Activated CD4-positive, alpha-beta memory T cell treated with anti-CD3 and anti-CD28 coated beads for 36 hours (primary cell): ENCODE measurements at regions of chr2 and their contacts with region 1.

Region 1: GRCh38 chr2:233953087-233953801 is 36.1 kb downstream of the TRPM8 start:
- DNase-seq: no peak
- H3K4me3 Mint-ChIP-seq: no peak overlapping the region
- H3K27ac Mint-ChIP-seq: no peak overlapping the region
- H3K4me1 Mint-ChIP-seq: no peaks in the 10 kb centered on the region
- H3K27me3 Mint-ChIP-seq: peaks cover 29% of the 10 kb centered on the region

Region 2: GRCh38 chr2:233929352-233930022 is 23.8 kb before region 1 on chr2:
- CTCF ChIA-PET with region 1: no interaction called
- POLR2A ChIA-PET with region 1: no interaction called
- intact Hi-C with region 1: loop called (anchors 1 kb)
- DNase-seq: no peak
- H3K4me3 Mint-ChIP-seq: no peak overlapping the region
- H3K27ac Mint-ChIP-seq: no peak overlapping the region
- H3K4me1 Mint-ChIP-seq: peaks cover 4% of the 10 kb centered on the region
- H3K27me3 Mint-ChIP-seq: peaks cover 43% of the 10 kb centered on the region

Region 3: GRCh38 chr2:233940376-233941276 is 12.6 kb before region 1 on chr2:
- CTCF ChIA-PET with region 1: no interaction called
- POLR2A ChIA-PET with region 1: no interaction called
- intact Hi-C with region 1: no loop called
- DNase-seq: no peak
- H3K4me3 Mint-ChIP-seq: no peak overlapping the region
- H3K27ac Mint-ChIP-seq: no peak overlapping the region
- H3K4me1 Mint-ChIP-seq: peaks cover 3% of the 10 kb centered on the region
- H3K27me3 Mint-ChIP-seq: peaks cover 52% of the 10 kb centered on the region

Region 4: GRCh38 chr2:233999182-233999581 is 45.9 kb after region 1 on chr2:
- CTCF ChIA-PET with region 1: no interaction called
- POLR2A ChIA-PET with region 1: no interaction called
- intact Hi-C with region 1: no loop called
- DNase-seq: no peak
- H3K4me3 Mint-ChIP-seq: no peak overlapping the region
- H3K27ac Mint-ChIP-seq: no peak overlapping the region
- H3K4me1 Mint-ChIP-seq: peaks cover 55% of the 10 kb centered on the region
- H3K27me3 Mint-ChIP-seq: no peaks in the 10 kb centered on the region

Region 5: GRCh38 chr2:234074751-234075517 is 121.7 kb after region 1 on chr2:
- CTCF ChIA-PET with region 1: no interaction called
- POLR2A ChIA-PET with region 1: no interaction called
- intact Hi-C with region 1: no loop called
- DNase-seq: no peak
- H3K4me3 Mint-ChIP-seq: no peak overlapping the region
- H3K27ac Mint-ChIP-seq: no peak overlapping the region
- H3K4me1 Mint-ChIP-seq: peaks cover 13% of the 10 kb centered on the region
- H3K27me3 Mint-ChIP-seq: no peaks in the 10 kb centered on the region